ENCODE measurements at regions of chr12 and their contacts with region 1.

Region 1: DNA sequence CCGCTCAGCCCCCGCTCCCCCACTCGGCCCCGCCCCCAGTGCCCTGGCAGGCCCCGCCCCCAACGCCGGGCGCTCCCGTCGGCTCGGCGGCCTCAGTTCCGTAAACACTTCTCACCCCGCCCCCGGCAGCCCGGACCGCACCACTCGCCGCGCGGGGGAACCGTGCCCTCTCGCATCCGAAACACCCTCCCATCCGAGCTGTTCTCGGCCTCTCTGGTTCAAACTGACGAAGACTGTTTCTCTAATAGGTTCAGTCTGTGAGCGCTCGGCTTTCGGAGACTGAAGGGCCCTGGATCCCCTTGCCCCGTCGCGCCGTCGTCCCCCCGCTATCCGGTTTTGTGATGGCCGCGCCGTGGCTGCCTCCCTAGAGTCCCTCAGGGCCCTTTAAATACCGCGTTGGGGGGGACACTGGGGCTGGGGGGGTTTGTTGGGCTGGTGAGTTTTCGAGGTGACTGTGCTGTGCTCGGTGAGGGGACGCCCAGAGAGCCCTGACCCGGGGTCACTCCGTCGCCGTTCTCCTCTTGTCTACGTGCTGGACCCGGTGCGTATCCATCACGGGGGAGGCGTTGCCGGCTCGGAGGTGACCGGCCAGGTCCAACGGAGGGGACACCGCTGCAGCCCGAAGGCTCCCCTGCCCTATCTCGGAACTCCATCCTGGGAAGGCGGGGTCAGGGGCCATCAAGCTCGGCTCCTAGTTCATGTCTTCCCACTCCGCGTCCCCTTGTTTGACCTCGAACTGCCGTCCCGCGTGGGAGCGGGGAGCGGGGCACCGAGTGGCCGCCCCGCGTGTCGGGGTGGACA is at the start of gene TCP11L2:
- DNase-seq: peak; percentile 89 to 97 (median 92)
- ATAC-seq: peak; percentile 49
- H3K4me3 ChIP-seq: peak within 1 kb of the TSS; percentile 97
- H3K4me3 Mint-ChIP-seq: peak within 1 kb of the TSS; percentile 99
- H3K27ac ChIP-seq: peak within 1 kb of the TSS; percentile 99 to 100
- H3K27ac Mint-ChIP-seq: peak within 1 kb of the TSS; percentile 99
- H3K4me1 ChIP-seq: peaks cover 49% of the 10 kb centered on the region
- H3K4me1 Mint-ChIP-seq: peaks cover 64% of the 10 kb centered on the region
- H3K27me3 ChIP-seq: no peaks in the 10 kb centered on the region
- H3K27me3 Mint-ChIP-seq: no peaks in the 10 kb centered on the region
- CTCF ChIP-seq: no peak
- total RNA-seq, gene TCP11L2: 139 to 144 TPM

Region 2: GRCh38 chr12:106223485-106224354 is 78.9 kb before region 1 on chr12:
- CTCF ChIA-PET with region 1: interaction called, 15 read pairs
- POLR2A ChIA-PET with region 1: interaction called, 97 read pairs
- intact Hi-C with region 1: loop called in 1 of 2 experiments (anchors 1 kb)
- DNase-seq: peak; percentile 57 to 83 (median 69)
- ATAC-seq: peak; percentile 62
- H3K4me3 ChIP-seq: no peak overlapping the region
- H3K4me3 Mint-ChIP-seq: no peak overlapping the region
- H3K27ac ChIP-seq: no peak overlapping the region
- H3K27ac Mint-ChIP-seq: no peak overlapping the region
- H3K4me1 ChIP-seq: peaks cover 20% of the 10 kb centered on the region
- H3K4me1 Mint-ChIP-seq: peaks cover 21% of the 10 kb centered on the region
- H3K27me3 ChIP-seq: peaks cover 0 to 5% of the 10 kb centered on the region in 2 experiments
- H3K27me3 Mint-ChIP-seq: peaks cover 5% of the 10 kb centered on the region
- CTCF ChIP-seq: peak; percentile 91

Region 3: DNA sequence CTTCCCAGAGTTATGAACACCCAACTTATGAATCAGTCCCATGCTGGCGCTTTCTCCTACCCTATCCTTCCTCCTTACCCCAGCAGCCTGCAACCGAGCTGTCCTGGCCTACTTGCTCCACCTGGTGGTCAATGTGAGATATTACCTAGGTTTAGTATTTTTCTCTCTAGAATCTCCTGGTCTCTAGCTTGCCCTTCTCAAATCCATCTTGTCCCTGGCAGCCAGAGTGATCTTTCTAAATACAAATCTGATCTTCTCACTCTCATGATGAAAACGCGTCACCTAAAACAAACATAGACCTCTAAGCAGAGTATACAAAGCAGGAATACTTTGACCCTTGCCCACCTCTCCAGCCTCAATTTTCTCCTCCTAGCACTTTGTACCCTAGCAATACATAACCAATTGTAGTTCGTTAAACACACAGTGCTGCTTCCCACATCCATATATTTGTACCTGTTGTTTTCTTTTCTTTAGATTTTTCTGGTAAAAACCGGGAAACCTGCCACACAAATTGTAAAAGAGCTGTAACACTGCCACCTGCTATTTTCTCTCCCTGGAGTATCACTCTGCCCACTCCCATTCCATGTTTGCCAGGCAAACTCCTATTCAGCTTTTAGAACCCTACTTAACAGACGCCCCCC is 20.0 kb before region 1 on chr12:
- CTCF ChIA-PET with region 1: interaction called, 19 read pairs
- POLR2A ChIA-PET with region 1: interaction called, 70 read pairs
- intact Hi-C with region 1: no loop called
- DNase-seq: peak; percentile 20 to 81 (median 37)
- ATAC-seq: peak; percentile 96
- H3K4me3 ChIP-seq: no peak overlapping the region
- H3K4me3 Mint-ChIP-seq: no peak overlapping the region
- H3K27ac ChIP-seq: no peak overlapping the region
- H3K27ac Mint-ChIP-seq: no peak overlapping the region
- H3K4me1 ChIP-seq: no peaks in the 10 kb centered on the region
- H3K4me1 Mint-ChIP-seq: no peaks in the 10 kb centered on the region
- H3K27me3 ChIP-seq: no peaks in the 10 kb centered on the region
- H3K27me3 Mint-ChIP-seq: peaks cover 10% of the 10 kb centered on the region
- CTCF ChIP-seq: peak; percentile 73

Region 4: GRCh38 chr12:106321139-106321850 is 18.7 kb after region 1 on chr12:
- CTCF ChIA-PET with region 1: no interaction called
- POLR2A ChIA-PET with region 1: interaction called, 14 read pairs
- intact Hi-C with region 1: no loop called
- DNase-seq: no peak
- ATAC-seq: no peak
- H3K4me3 ChIP-seq: no peak overlapping the region
- H3K4me3 Mint-ChIP-seq: no peak overlapping the region
- H3K27ac ChIP-seq: no peak overlapping the region
- H3K27ac Mint-ChIP-seq: no peak overlapping the region
- H3K4me1 ChIP-seq: peaks cover 2% of the 10 kb centered on the region
- H3K4me1 Mint-ChIP-seq: peaks cover 13% of the 10 kb centered on the region
- H3K27me3 ChIP-seq: no peaks in the 10 kb centered on the region
- H3K27me3 Mint-ChIP-seq: no peaks in the 10 kb centered on the region
- CTCF ChIP-seq: no peak

Region 5: GRCh38 chr12:106409878-106410277 is 107.3 kb after region 1 on chr12:
- CTCF ChIA-PET with region 1: no interaction called
- POLR2A ChIA-PET with region 1: no interaction called
- intact Hi-C with region 1: no loop called
- DNase-seq: no peak
- ATAC-seq: no peak
- H3K4me3 ChIP-seq: no peak overlapping the region
- H3K4me3 Mint-ChIP-seq: no peak overlapping the region
- H3K27ac ChIP-seq: no peak overlapping the region
- H3K27ac Mint-ChIP-seq: no peak overlapping the region
- H3K4me1 ChIP-seq: no peaks in the 10 kb centered on the region
- H3K4me1 Mint-ChIP-seq: no peaks in the 10 kb centered on the region
- H3K27me3 ChIP-seq: no peaks in the 10 kb centered on the region
- H3K27me3 Mint-ChIP-seq: no peaks in the 10 kb centered on the region
- CTCF ChIP-seq: no peak

Region 6: DNA sequence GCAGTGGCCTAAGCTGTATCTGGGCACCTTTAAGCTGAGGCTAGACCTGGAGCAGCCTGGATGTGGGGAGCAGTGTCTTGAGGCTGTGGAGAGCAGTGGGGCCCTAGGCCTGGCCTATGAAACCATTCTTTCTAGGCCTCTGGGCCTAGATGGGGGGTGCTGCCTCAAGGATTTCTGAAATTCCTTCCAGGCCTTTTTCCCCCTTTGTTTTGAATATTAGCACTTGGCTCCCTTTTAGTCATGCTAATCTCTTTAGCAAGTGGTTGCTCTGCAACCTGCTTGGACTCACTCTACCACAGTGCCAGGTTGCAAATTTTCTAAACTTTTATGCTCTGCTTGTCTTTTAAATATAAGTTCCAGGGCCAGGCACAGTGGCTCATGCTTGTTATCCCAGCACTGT is 238.6 kb after region 1 on chr12:
- CTCF ChIA-PET with region 1: no interaction called
- POLR2A ChIA-PET with region 1: no interaction called
- intact Hi-C with region 1: no loop called
- DNase-seq: no peak
- ATAC-seq: no peak
- H3K4me3 ChIP-seq: no peak overlapping the region
- H3K4me3 Mint-ChIP-seq: no peak overlapping the region
- H3K27ac ChIP-seq: no peak overlapping the region
- H3K27ac Mint-ChIP-seq: no peak overlapping the region
- H3K4me1 ChIP-seq: no peaks in the 10 kb centered on the region
- H3K4me1 Mint-ChIP-seq: no peaks in the 10 kb centered on the region
- H3K27me3 ChIP-seq: no peaks in the 10 kb centered on the region
- H3K27me3 Mint-ChIP-seq: peaks cover 20% of the 10 kb centered on the region
- CTCF ChIP-seq: no peak

Region 7: GRCh38 chr12:106955377-106956047 is 652.9 kb after region 1 on chr12 and contains the start of gene TMEM263:
- CTCF ChIA-PET with region 1: no interaction called
- POLR2A ChIA-PET with region 1: interaction called, 43 read pairs
- intact Hi-C with region 1: no loop called
- DNase-seq: peak; percentile 74 to 97 (median 88)
- ATAC-seq: peak; percentile 73
- H3K4me3 ChIP-seq: peak within 1 kb of the TSS; percentile 77
- H3K4me3 Mint-ChIP-seq: peak within 1 kb of the TSS; percentile 98
- H3K27ac ChIP-seq: peak within 1 kb of the TSS; percentile 81 to 89
- H3K27ac Mint-ChIP-seq: peak within 1 kb of the TSS; percentile 98
- H3K4me1 ChIP-seq: peaks cover 13% of the 10 kb centered on the region
- H3K4me1 Mint-ChIP-seq: peaks cover 43% of the 10 kb centered on the region
- H3K27me3 ChIP-seq: no peaks in the 10 kb centered on the region
- H3K27me3 Mint-ChIP-seq: no peaks in the 10 kb centered on the region
- CTCF ChIP-seq: no peak
- total RNA-seq, gene TMEM263: 33.2 to 33.4 TPM

Measured in CD4-positive, alpha-beta T cell (primary cell).